ENCODE measurements at regions of chr17 and their contacts with region 1.

Region 1: DNA sequence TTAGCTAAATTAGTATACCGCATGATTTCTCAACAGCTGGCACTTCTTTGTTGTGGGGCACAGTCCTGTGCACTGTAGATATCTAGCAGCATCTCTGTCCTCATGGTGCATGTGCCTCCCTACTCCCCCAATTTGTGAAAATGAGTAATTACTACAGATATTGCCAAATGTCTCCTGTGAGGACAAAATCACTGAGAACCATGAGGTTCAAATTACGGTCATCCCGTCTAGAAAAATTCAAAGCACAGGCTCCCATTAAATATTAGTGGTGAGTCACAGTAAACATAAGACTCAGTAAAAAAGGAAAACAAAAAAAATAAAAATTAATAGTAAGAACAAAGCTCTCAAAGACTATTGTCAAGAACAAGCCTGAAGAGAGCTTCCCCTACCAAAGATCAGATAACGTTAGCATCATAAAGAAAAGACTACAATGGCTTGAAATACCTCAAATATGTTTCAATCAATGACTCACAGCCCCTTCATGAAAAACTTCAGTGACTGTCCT is 57.8 kb downstream of the STH start:
- DNase-seq: no peak
- ATAC-seq: no peak
- H3K4me3 Mint-ChIP-seq: no peak overlapping the region
- H3K27ac Mint-ChIP-seq: no peak overlapping the region
- H3K4me1 Mint-ChIP-seq: peaks cover 43% of the 10 kb centered on the region
- H3K27me3 Mint-ChIP-seq: no peaks in the 10 kb centered on the region

Region 2: DNA sequence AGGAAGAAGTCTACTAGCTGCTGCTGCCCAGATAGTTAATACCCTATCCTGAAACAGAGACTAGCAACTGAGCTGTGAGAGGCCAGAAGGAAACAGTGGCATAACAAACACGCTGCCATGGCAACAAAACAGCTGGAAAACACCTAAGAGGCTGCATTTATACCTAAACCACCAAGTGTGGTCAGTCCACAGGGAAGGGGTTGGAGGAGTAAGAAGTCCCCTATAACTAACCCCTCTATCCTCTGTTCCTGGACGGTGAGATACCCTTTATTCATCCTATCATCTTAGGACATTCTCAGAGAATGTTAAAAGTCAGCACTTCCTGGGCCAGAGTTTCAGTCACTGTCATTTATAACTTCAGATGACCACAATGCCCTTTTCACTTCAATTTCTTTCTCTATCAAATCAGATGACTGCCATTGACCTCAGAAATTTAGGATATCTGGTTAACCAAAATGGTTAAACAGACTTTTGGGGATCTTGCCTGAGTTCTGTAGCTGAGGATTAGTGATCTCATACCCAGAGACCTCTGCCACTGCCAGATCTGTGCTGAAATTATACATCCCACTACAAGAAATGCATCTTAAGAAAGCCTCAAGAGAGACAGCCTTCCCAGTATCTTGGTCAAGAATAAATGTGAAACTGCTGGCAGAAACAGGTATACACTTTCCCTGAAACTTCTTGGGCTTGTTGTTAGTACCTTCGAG is 21.6 kb before region 1 on chr17:
- CTCF ChIA-PET with region 1: interaction called, 16 read pairs
- POLR2A ChIA-PET with region 1: interaction called, 6 read pairs
- intact Hi-C with region 1: no loop called
- DNase-seq: peak; percentile 31
- ATAC-seq: peak; percentile 36
- H3K4me3 Mint-ChIP-seq: no peak overlapping the region
- H3K27ac Mint-ChIP-seq: peak overlapping the region; percentile 29
- H3K4me1 Mint-ChIP-seq: peaks cover 9% of the 10 kb centered on the region
- H3K27me3 Mint-ChIP-seq: no peaks in the 10 kb centered on the region

Region 3: GRCh38 chr17:46092991-46093390 is 36.1 kb after region 1 on chr17:
- CTCF ChIA-PET with region 1: interaction called, 7 read pairs
- POLR2A ChIA-PET with region 1: no interaction called
- intact Hi-C with region 1: loop called in 1 of 2 experiments (anchors 5 kb)
- DNase-seq: no peak
- ATAC-seq: no peak
- H3K4me3 Mint-ChIP-seq: no peak overlapping the region
- H3K27ac Mint-ChIP-seq: no peak overlapping the region
- H3K4me1 Mint-ChIP-seq: peaks cover 59% of the 10 kb centered on the region
- H3K27me3 Mint-ChIP-seq: no peaks in the 10 kb centered on the region

Region 4: GRCh38 chr17:46100590-46100989 is 43.7 kb after region 1 on chr17:
- CTCF ChIA-PET with region 1: no interaction called
- POLR2A ChIA-PET with region 1: interaction called, 5 read pairs
- intact Hi-C with region 1: loop called in 1 of 2 experiments (anchors 5 kb)
- DNase-seq: no peak
- ATAC-seq: no peak
- H3K4me3 Mint-ChIP-seq: no peak overlapping the region
- H3K27ac Mint-ChIP-seq: peak overlapping the region; percentile 80
- H3K4me1 Mint-ChIP-seq: peaks cover 71% of the 10 kb centered on the region
- H3K27me3 Mint-ChIP-seq: no peaks in the 10 kb centered on the region

Region 5: GRCh38 chr17:46147296-46147695 is 90.4 kb after region 1 on chr17:
- CTCF ChIA-PET with region 1: interaction called, 5 read pairs
- POLR2A ChIA-PET with region 1: no interaction called
- intact Hi-C with region 1: loop called in 1 of 2 experiments (anchors 5 kb)
- DNase-seq: peak; percentile 38
- ATAC-seq: peak; percentile 9
- H3K4me3 Mint-ChIP-seq: no peak overlapping the region
- H3K27ac Mint-ChIP-seq: peak overlapping the region; percentile 45
- H3K4me1 Mint-ChIP-seq: peaks cover 88% of the 10 kb centered on the region
- H3K27me3 Mint-ChIP-seq: no peaks in the 10 kb centered on the region

Region 6: DNA sequence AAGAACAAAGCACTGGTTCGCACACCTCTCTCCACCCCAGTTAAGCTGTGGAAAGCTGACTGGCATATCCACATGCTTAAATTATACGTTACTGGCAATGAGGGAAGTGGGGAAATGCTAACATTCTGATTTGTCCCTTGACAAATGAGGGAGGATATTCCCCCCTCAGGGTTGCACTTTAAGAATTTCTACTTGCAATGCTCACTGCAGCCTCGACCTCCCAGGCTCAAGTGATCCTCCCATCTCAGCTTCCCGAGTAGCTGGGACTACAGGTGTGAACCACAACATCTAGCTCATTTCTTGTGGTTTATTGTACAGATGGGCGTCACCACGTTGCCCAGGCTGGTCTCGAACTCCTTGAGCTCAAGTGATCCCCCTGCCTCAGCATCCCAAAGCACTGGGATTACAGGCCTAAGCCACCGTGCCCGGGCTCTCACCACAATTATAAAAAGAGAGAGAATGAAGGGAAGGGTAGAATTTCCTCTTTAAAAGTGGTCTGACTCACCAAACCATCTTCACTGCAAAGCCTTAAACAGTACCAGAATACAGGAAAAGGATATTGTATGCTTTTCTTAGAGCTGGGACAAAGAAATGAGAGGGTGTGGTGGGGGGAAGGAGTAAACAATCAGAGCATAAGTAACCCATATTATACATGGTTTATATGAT is 97.4 kb after region 1 on chr17:
- CTCF ChIA-PET with region 1: interaction called, 5 read pairs
- POLR2A ChIA-PET with region 1: interaction called, 4 read pairs
- intact Hi-C with region 1: loop called (anchors 2 to 5 kb)
- DNase-seq: peak; percentile 40
- ATAC-seq: peak; percentile 16
- H3K4me3 Mint-ChIP-seq: peak overlapping the region; percentile 46
- H3K27ac Mint-ChIP-seq: peak overlapping the region; percentile 52
- H3K4me1 Mint-ChIP-seq: peaks cover 90% of the 10 kb centered on the region
- H3K27me3 Mint-ChIP-seq: no peaks in the 10 kb centered on the region